Right lobe of liver (tissue), 6 donors: ENCODE measurements at regions of chrX and their contacts with region 1.

Region 1: GRCh38 chrX:43939187-43939926 is 33.8 kb downstream of the NDP start:
- DNase-seq: no peak
- ATAC-seq: peak; percentile 54 to 67 (median 56)
- H3K4me3 ChIP-seq: no peak overlapping the region
- H3K27ac ChIP-seq: no peak overlapping the region
- H3K4me1 ChIP-seq: no peaks in the 10 kb centered on the region
- H3K27me3 ChIP-seq: peaks cover 0 to under 1% of the 10 kb centered on the region in 2 donors
- CTCF ChIP-seq: peak; percentile 24 to 37 (median 34)
- POLR2A ChIP-seq: no peak

Region 2: DNA sequence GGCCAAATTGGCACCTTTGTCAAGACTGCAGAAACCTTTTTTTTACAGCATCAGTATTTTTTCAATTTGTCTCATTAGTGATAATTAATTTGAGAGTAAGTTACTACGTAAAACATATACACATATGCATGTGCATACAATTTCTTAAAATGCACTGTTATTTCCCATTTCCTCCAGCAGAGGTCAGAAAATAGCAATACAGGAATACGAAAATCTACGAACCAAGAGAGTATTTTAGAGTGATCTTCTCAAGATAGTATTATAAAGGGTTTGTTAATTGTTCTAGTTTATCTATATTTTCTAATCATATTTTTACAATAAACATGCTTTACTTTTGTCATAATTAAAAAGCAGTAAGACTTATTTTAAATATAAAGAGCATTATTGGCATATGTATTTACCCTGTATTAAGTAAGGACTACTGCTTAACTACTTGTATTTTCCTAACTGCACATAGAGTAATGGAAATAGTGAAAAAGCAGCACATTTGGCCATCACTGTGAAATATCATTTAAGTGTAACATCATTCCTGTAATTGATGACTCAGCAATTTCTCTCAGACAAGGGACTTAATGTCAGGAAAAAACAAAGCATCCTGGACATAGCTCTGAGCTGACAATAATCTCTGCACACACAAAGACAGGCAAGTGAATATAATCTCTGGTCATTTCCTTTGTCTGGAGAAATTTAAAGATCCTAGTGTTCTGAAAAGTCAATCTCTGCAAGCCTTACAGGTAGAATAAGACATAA is 102.7 kb before region 1 on chrX:
- intact Hi-C with region 1: loop called in 1 of 2 experiments (anchors 10 kb)
- DNase-seq: no peak
- ATAC-seq: peak; percentile 53 to 64 (median 57)
- H3K4me3 ChIP-seq: no peak overlapping the region
- H3K27ac ChIP-seq: no peak overlapping the region
- H3K4me1 ChIP-seq: peaks cover 0 to 5% (median 0%) of the 10 kb centered on the region in 4 donors
- H3K27me3 ChIP-seq: no peaks in the 10 kb centered on the region
- CTCF ChIP-seq: peak; percentile 62 to 76 (median 71)
- POLR2A ChIP-seq: no peak

Region 3: DNA sequence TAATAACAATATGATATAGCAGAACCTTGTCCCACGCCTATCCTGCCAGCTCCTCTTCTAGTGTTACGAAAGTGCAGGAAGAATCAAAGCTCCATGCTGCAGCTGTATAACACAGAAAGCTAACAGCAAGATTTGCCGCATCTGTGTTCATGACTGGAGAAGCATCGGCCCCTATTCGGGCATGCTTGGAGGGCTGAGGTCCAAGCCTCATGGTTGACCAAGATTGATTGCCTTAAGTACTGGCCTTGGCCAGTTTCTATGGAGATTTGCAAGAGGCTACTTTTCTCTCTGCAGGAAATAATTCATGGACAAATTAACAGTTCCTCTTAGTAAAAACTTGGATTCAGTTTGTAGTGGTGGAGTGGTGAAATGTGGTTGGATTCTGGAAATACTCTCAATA is 46.7 kb after region 1 on chrX:
- intact Hi-C with region 1: no loop called
- DNase-seq: no peak
- ATAC-seq: no peak
- H3K4me3 ChIP-seq: no peak overlapping the region
- H3K27ac ChIP-seq: no peak overlapping the region
- H3K4me1 ChIP-seq: no peaks in the 10 kb centered on the region
- H3K27me3 ChIP-seq: no peaks in the 10 kb centered on the region
- CTCF ChIP-seq: no peak
- POLR2A ChIP-seq: no peak